Dorsolateral prefrontal cortex (tissue), 120 donors: ENCODE measurements at regions of chr20 and their contacts with region 1.

Region 1: DNA sequence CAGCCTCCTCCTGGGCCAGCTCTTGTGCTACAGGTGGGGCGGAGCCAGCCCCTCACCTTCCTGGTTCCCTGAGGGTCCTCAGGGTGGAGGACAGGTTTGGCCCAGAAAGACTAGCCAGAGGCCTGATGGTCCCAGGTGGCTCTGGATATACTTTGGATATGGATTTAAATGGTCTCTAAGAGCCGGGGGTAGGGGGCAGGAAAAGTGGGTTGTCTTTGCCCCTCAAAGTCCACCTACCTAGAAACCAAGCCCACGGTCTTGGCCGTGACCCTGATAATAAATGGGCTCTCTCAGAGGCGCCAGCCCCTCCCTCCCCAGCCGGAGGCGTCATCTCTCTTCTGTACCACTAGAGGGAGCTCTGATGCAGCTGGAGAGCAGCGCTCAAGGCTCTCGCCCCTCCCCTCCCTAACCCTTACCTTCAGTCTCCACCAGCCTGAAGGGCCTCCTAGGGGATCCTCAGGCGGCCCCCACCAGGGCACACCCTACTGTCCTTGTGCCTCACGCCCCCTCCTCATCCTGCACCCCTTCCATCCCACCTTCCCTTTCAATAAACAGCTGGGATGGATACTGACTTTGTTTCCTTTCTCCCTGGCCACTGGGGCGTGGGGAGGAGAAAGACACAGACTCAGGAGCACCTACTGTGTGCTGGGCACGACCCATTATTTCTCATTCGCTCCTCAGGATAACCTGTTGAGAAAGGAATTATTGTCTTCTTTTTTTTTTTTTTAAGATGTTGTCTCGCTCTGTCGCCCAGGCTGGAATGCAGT is 7.6 kb downstream of the NRSN2 start:
- DNase-seq: peak in 9 of 10 donors; percentile 41 to 79 (median 69)
- H3K4me3 ChIP-seq: peak overlapping the region in 1 of 59 donors; percentile 20
- H3K27ac ChIP-seq: peak overlapping the region in 18 of 59 donors; percentile 0 to 52 (median 26)
- H3K27me3 ChIP-seq: no peaks in the 10 kb centered on the region
- CTCF ChIP-seq: peak; percentile 52 to 98 (median 93)

Region 2: GRCh38 chr20:407133-407952 is 52.9 kb after region 1 on chr20:
- intact Hi-C with region 1: loop called in 1 of 2 experiments (anchors 5 kb)
- DNase-seq: peak; percentile 58 to 83 (median 74)
- H3K4me3 ChIP-seq: peak overlapping the region; percentile 39 to 100 (median 98)
- H3K27ac ChIP-seq: peak overlapping the region in 54 of 59 donors; percentile 6 to 99 (median 88)
- H3K27me3 ChIP-seq: no peaks in the 10 kb centered on the region
- CTCF ChIP-seq: peak in 23 of 56 donors; percentile 11 to 48 (median 26)

Region 3: GRCh38 chr20:431012-431904 is 76.8 kb after region 1 on chr20:
- intact Hi-C with region 1: loop called (anchors 2 to 5 kb)
- DNase-seq: peak; percentile 69 to 94 (median 84)
- H3K4me3 ChIP-seq: no peak overlapping the region
- H3K27ac ChIP-seq: peak overlapping the region in 48 of 59 donors; percentile 2 to 81 (median 54)
- H3K27me3 ChIP-seq: no peaks in the 10 kb centered on the region
- CTCF ChIP-seq: peak; percentile 55 to 97 (median 88)

Region 4: DNA sequence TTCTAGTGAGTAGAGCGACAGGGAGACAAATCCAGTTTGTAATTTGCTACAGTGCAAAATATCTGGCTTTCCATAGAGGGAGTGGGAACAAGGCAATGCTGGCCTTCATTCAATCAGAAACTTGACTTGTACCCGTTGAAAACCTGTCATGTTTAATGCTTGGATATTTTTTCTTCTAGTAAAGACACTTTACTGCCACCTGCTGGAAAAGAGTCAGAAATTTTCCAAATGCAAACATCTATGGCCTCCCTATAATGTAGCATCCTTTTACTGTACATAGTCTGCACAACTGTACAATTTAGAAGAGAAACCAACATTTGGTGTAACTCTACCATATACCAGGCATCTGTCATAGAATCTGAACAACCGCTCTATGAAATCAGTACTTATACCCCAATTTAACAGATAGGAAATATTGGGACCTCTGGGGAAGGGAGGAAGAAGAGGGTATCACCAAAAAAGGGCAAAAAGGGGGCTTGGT is 124.5 kb after region 1 on chr20:
- intact Hi-C with region 1: loop called (anchors 2 to 5 kb)
- DNase-seq: peak in 1 of 10 donors; percentile 18
- H3K4me3 ChIP-seq: no peak overlapping the region
- H3K27ac ChIP-seq: peak overlapping the region in 8 of 59 donors; percentile 4 to 65 (median 16)
- H3K27me3 ChIP-seq: no peaks in the 10 kb centered on the region
- CTCF ChIP-seq: peak; percentile 45 to 87 (median 71)

Region 5: DNA sequence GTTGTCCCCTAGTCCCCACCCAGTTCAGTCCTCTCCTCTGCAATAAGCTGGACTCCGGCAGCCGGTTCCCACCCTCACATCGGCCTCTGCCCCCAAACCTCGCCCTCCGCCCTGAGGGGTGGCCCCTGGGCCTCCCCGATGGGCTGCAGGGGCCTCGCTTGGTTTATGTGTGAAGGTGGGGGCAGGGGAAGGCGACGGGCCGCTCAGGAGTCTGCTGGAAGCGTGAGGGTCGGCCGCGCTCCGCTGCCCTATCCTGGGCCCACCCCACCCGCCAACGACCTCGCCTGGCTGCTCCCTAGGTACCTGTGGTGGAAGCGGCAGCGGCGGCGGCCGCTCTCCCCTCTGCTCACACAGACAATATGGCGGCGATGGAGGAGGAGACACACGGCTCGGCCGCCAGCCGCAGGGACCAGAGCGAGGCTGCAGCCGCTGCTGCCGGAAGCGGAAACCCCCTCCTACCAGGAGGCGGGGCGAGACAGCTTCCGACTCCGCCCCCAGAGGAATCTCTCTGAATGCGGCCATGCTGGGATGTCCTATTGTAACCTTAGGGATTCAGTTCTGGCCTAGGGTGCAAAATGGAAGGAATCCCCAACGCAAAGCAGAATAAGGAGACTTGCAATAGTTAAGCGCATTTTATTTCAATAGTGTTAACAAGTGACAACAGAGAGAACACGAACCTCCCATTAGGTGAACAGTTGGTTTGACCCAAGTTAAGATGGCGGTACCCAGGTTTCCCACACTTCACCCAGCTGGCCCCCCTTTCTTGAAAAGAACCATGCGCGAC is 189.1 kb after region 1 on chr20 and contains the start of gene CSNK2A1:
- intact Hi-C with region 1: loop called in 1 of 2 experiments (anchors 5 kb)
- DNase-seq: peak; percentile 90 to 96 (median 94)
- H3K4me3 ChIP-seq: peak within 1 kb of the TSS; percentile 72 to 100 (median 95)
- H3K27ac ChIP-seq: peak within 1 kb of the TSS; percentile 80 to 100 (median 97)
- H3K27me3 ChIP-seq: peaks cover 0 to 5% (median 0%) of the 10 kb centered on the region in 45 donors
- CTCF ChIP-seq: peak in 23 of 56 donors; percentile 7 to 59 (median 37)
- total RNA-seq, gene CSNK2A1: 89.8 to 145 (median 121) TPM

Region 6: DNA sequence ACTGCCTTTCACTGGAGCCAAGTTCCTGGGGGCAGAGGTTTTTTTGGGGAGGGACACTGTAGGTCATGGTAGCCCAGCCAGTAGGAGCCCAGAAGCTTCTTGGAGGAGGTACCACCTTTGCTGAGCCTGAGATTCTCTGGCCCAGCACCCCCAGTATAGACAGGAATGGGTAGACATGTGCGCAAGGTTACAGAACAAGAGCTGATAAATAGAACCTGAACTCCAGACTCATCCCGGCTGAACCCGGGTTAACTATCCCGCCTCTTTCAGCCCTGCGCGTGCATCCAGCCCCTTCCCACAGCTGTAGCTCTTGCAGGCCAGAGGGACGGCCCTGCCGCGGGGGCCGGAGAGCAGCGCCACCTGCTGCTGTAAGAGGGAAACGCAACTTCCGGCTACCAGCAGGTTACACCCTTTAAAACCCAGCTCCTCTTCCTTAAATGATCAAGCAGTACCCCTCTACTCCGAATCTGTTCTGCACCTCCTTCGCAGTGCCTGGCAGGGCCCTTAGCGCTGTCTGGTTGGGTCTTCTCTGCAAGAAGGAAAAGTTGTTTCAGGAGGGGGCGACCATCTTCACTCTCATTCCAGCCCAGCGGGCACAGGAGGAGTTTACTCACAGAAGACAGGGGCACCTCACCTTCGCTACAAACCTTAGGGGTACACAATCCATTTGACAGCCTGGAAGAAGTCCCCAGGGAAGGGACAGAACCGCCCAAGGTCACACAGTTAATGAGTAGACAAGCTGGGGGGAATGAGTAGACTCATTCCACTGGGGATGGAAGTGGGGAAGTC is 291.0 kb after region 1 on chr20:
- intact Hi-C with region 1: loop called (anchors 5 to 10 kb)
- DNase-seq: peak in 9 of 10 donors; percentile 41 to 85 (median 62)
- H3K4me3 ChIP-seq: peak overlapping the region in 3 of 59 donors; percentile 0 to 23 (median 6)
- H3K27ac ChIP-seq: peak overlapping the region in 27 of 59 donors; percentile 1 to 70 (median 34)
- H3K27me3 ChIP-seq: no peaks in the 10 kb centered on the region
- CTCF ChIP-seq: peak; percentile 89 to 99 (median 96)

Region 7: GRCh38 chr20:733861-734260 is 379.4 kb after region 1 on chr20:
- intact Hi-C with region 1: loop called (anchors 10 kb)
- DNase-seq: no peak
- H3K4me3 ChIP-seq: no peak overlapping the region
- H3K27ac ChIP-seq: no peak overlapping the region
- H3K27me3 ChIP-seq: peaks cover 0 to 6% (median 0%) of the 10 kb centered on the region in 45 donors
- CTCF ChIP-seq: no peak